ENCODE measurements at regions of chr1 and their contacts with region 1.

Region 1: GRCh38 chr1:41662061-41662764 is 177.7 kb upstream of the EDN2 start:
- DNase-seq: no peak
- ATAC-seq: peak; percentile 74
- H3K4me3 ChIP-seq: peak overlapping the region; percentile 80
- H3K27ac ChIP-seq: peak overlapping the region; percentile 28; the same call in 1 of the 2 replicates
- H3K4me1 ChIP-seq: peaks cover 26% of the 10 kb centered on the region
- H3K27me3 ChIP-seq: no peaks in the 10 kb centered on the region
- CTCF ChIP-seq: no peak
- EP300 ChIP-seq: no peak
- POLR2A ChIP-seq: peak; percentile 35; the same call in 1 of the 2 replicates
- RAD21 ChIP-seq: no peak

Region 2: DNA sequence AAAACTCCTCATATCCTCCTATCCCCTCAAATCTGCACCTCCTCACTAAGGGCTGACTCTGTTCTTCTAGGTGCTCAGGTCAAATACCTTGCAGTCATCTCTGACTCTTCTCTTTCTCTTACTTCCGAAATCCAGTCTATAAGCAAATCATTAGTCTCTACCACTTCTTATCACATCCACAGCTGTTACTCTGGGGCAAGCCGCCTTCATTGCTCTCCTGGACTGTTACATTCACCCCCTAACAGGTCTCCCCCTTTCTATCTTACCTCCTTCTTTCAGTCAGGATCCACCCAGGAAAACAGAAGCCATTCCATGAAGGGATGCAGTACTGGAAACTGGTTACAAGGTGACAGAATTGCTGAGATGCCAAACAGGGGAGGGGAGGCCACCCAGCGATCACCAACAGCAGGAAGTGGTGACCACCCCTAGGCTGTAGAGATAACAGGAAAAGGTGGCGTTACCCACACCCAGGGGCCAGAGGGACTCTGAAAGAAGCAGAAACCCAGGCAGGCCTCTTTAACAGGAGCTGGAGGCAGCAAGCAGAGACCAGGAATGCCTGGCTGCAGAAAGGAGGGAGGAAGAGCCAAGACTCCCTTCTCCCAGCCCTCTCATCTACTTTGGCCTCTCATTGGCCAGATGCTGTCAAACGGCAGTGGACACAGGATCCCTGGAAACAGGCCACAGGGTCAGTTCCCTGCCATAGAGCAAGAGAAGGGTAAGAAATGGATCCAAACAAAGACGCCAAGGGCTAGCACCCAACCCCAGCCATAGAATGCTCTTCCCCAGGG is 356.4 kb before region 1 on chr1:
- CTCF ChIA-PET with region 1: no interaction called
- POLR2A ChIA-PET with region 1: no interaction called
- RAD21 ChIA-PET with region 1: no interaction called
- SMC1A ChIA-PET with region 1: no interaction called
- in situ Hi-C with region 1: no loop called
- intact Hi-C with region 1: no loop called
- DNase-seq: no peak
- ATAC-seq: no peak
- H3K4me3 ChIP-seq: no peak overlapping the region
- H3K27ac ChIP-seq: no peak overlapping the region
- H3K4me1 ChIP-seq: no peaks in the 10 kb centered on the region
- H3K27me3 ChIP-seq: no peaks in the 10 kb centered on the region; a peak in 3 of 4 replicates
- CTCF ChIP-seq: no peak
- EP300 ChIP-seq: no peak
- POLR2A ChIP-seq: no peak
- RAD21 ChIP-seq: no peak

Region 3: GRCh38 chr1:41599912-41600311 is 62.3 kb before region 1 on chr1:
- CTCF ChIA-PET with region 1: interaction called, 3 read pairs
- POLR2A ChIA-PET with region 1: no interaction called
- RAD21 ChIA-PET with region 1: interaction called, 3 read pairs
- SMC1A ChIA-PET with region 1: interaction called, 13 read pairs
- in situ Hi-C with region 1: no loop called
- intact Hi-C with region 1: no loop called
- DNase-seq: no peak
- ATAC-seq: no peak
- H3K4me3 ChIP-seq: no peak overlapping the region
- H3K27ac ChIP-seq: no peak overlapping the region
- H3K4me1 ChIP-seq: no peaks in the 10 kb centered on the region
- H3K27me3 ChIP-seq: no peaks in the 10 kb centered on the region
- CTCF ChIP-seq: no peak
- EP300 ChIP-seq: no peak
- POLR2A ChIP-seq: no peak
- RAD21 ChIP-seq: no peak

Region 4: GRCh38 chr1:41650028-41650880 is 12.0 kb before region 1 on chr1:
- CTCF ChIA-PET with region 1: interaction called, 5 read pairs
- POLR2A ChIA-PET with region 1: interaction called, 10 read pairs
- RAD21 ChIA-PET with region 1: interaction called, 83 read pairs
- SMC1A ChIA-PET with region 1: interaction called, 102 read pairs
- in situ Hi-C with region 1: no loop called
- intact Hi-C with region 1: no loop called
- DNase-seq: no peak
- ATAC-seq: no peak
- H3K4me3 ChIP-seq: no peak overlapping the region
- H3K27ac ChIP-seq: no peak overlapping the region
- H3K4me1 ChIP-seq: no peaks in the 10 kb centered on the region
- H3K27me3 ChIP-seq: no peaks in the 10 kb centered on the region
- CTCF ChIP-seq: no peak
- EP300 ChIP-seq: no peak
- POLR2A ChIP-seq: no peak
- RAD21 ChIP-seq: no peak

Region 5: GRCh38 chr1:41689558-41689981 is 27.4 kb after region 1 on chr1:
- CTCF ChIA-PET with region 1: interaction called, 7 read pairs
- POLR2A ChIA-PET with region 1: interaction called, 3 read pairs
- RAD21 ChIA-PET with region 1: interaction called, 9 read pairs
- SMC1A ChIA-PET with region 1: interaction called, 15 read pairs
- in situ Hi-C with region 1: no loop called
- intact Hi-C with region 1: no loop called
- DNase-seq: no peak
- ATAC-seq: no peak
- H3K4me3 ChIP-seq: no peak overlapping the region
- H3K27ac ChIP-seq: no peak overlapping the region
- H3K4me1 ChIP-seq: peaks cover 20% of the 10 kb centered on the region
- H3K27me3 ChIP-seq: no peaks in the 10 kb centered on the region
- CTCF ChIP-seq: no peak
- EP300 ChIP-seq: no peak
- POLR2A ChIP-seq: no peak
- RAD21 ChIP-seq: no peak

Region 6: GRCh38 chr1:41739061-41739955 is 77.1 kb after region 1 on chr1:
- CTCF ChIA-PET with region 1: interaction called, 3 read pairs
- POLR2A ChIA-PET with region 1: interaction called, 5 read pairs
- RAD21 ChIA-PET with region 1: interaction called, 20 read pairs
- SMC1A ChIA-PET with region 1: interaction called, 6 read pairs
- in situ Hi-C with region 1: no loop called
- intact Hi-C with region 1: no loop called
- DNase-seq: peak; percentile 66
- ATAC-seq: peak; percentile 87
- H3K4me3 ChIP-seq: peak overlapping the region; percentile 41; the same call in 1 of the 2 replicates
- H3K27ac ChIP-seq: peak overlapping the region; percentile 94
- H3K4me1 ChIP-seq: peaks cover 54% of the 10 kb centered on the region
- H3K27me3 ChIP-seq: no peaks in the 10 kb centered on the region
- CTCF ChIP-seq: no peak
- EP300 ChIP-seq: peak; percentile 53 to 70; a peak in 1 of 4 replicates
- POLR2A ChIP-seq: peak; percentile 57
- RAD21 ChIP-seq: no peak

Region 7: GRCh38 chr1:41812051-41812450 is 149.8 kb after region 1 on chr1:
- CTCF ChIA-PET with region 1: interaction called, 7 read pairs
- POLR2A ChIA-PET with region 1: interaction called, 3 read pairs
- RAD21 ChIA-PET with region 1: interaction called, 5 read pairs
- SMC1A ChIA-PET with region 1: interaction called, 10 read pairs
- in situ Hi-C with region 1: no loop called
- intact Hi-C with region 1: loop called (anchors 5 kb)
- DNase-seq: no peak
- ATAC-seq: peak; percentile 70
- H3K4me3 ChIP-seq: no peak overlapping the region
- H3K27ac ChIP-seq: no peak overlapping the region
- H3K4me1 ChIP-seq: peaks cover 43% of the 10 kb centered on the region
- H3K27me3 ChIP-seq: no peaks in the 10 kb centered on the region
- CTCF ChIP-seq: peak; percentile 67 to 72 (median 70)
- EP300 ChIP-seq: no peak
- POLR2A ChIP-seq: no peak
- RAD21 ChIP-seq: peak; percentile 77